ENCODE measurements at regions of chr4 and their contacts with region 1.

Region 1: GRCh38 chr4:183727482-183727881 is 68.4 kb downstream of the TRAPPC11 start:
- DNase-seq: no peak
- H3K4me3 ChIP-seq: no peak overlapping the region
- H3K27ac ChIP-seq: no peak overlapping the region
- H3K27me3 ChIP-seq: no peaks in the 10 kb centered on the region
- CTCF ChIP-seq: no peak

Region 2: GRCh38 chr4:183758061-183758757 is 30.7 kb after region 1 on chr4:
- intact Hi-C with region 1: loop called in 1 of 2 experiments (anchors 2 kb)
- DNase-seq: no peak
- H3K4me3 ChIP-seq: no peak overlapping the region
- H3K27ac ChIP-seq: no peak overlapping the region
- H3K27me3 ChIP-seq: peaks cover 0 to 6% (median 0%) of the 10 kb centered on the region in 45 donors
- CTCF ChIP-seq: no peak

Measured in dorsolateral prefrontal cortex (tissue), 120 donors.